H1 (cell line): ENCODE measurements at regions of chr10 and their contacts with region 1.

Region 1: DNA sequence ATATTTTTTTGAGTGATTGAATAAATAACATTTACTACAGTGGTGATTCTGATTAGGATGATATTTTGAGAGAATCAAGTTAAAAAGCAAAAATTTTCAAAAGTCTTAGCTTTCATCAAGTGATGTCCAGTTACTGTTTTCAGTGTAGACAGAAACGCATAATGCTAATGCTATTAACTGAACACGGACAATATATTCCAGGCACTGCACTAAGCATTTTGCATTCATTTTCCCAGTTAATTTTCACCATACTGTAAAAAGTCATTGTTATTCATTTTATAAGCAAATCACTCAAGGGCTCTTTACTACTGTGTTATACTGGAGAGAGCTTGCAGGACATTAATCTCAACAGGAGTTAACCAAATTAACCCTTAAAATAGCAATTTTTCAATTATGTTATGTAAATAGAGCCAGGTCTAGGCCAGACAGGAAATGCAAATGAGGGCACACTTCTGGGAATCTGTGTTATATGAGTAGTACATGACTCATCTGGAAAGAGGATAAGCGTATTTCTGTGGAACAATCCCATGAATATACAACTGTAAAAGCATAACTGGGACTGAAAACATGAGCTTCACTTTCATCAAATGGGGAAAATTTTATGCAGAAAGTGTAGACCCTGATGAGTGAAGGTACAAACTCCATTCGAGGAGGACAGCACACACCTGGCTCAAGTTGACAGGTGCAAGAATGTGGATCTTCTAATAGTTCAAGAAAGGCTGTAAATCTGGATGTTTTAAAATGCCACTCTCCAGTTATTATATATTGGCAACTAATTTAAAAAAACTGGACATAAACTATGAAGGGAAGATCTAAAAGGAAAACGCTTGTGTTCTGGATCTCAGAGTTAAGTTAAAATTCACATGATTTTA is 75.4 kb downstream of the ANK3 start:
- DNase-seq: no peak
- H3K4me3 ChIP-seq: no peak overlapping the region
- H3K27ac ChIP-seq: no peak overlapping the region
- H3K4me1 ChIP-seq: peaks cover 0 to 3% (median 0%) of the 10 kb centered on the region in 4 experiments; a peak in 1 of 7 replicates
- H3K27me3 ChIP-seq: no peaks in the 10 kb centered on the region
- CTCF ChIP-seq: no peak
- EP300 ChIP-seq: no peak
- POLR2A ChIP-seq: no peak
- RAD21 ChIP-seq: no peak

Region 2: DNA sequence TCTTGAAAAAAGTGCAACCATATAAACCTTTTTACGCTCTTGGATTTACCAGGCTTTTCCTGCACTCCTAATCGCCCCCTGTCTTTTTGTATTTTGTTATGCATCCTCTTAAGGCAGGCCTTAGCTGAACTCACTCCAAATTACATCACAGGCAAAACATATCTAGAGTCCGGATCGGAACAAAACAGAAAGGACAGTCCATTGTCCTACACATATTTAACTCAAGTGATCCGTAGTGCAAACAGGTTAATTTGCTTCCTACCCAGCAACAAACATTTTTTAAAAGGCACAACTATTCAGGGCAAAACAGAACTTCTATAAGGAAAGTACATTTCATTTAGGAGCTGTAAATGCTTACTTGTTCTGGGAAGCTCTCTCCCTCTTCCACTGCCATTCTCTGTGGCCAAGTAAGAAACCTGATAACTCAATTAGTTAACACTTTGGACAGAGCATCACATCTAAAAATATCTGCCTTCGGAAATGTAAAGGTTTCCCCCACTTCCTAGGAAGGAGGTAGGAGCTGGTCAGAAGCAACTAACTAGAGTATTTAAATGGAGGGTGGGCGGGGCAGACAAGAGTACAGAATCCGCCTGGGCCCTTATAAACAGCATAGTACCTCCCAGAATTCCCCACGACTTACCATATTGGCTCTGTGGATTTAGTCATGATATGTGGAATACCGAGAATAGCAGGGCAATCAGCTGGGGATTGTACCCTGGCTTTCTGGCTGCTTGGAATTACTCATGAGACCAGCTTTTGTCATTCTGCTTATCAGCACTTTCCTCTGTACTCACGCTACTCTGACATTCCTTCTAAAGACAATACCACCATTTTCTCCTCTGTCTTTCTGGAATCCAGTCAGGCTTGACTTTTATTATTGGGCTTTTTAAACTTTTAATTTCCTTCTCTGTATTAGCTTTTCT is 14.1 kb before region 1 on chr10:
- CTCF ChIA-PET with region 1: interaction called, 10 read pairs
- POLR2A ChIA-PET with region 1: no interaction called
- DNase-seq: peak in 1 of 2 experiments; percentile 53
- H3K4me3 ChIP-seq: no peak overlapping the region
- H3K27ac ChIP-seq: no peak overlapping the region
- H3K4me1 ChIP-seq: peaks cover 1 to 6% (median 4%) of the 10 kb centered on the region in 4 experiments; a peak in 5 of 7 replicates
- H3K27me3 ChIP-seq: no peaks in the 10 kb centered on the region
- CTCF ChIP-seq: no peak
- EP300 ChIP-seq: no peak
- POLR2A ChIP-seq: no peak
- RAD21 ChIP-seq: no peak

Region 3: DNA sequence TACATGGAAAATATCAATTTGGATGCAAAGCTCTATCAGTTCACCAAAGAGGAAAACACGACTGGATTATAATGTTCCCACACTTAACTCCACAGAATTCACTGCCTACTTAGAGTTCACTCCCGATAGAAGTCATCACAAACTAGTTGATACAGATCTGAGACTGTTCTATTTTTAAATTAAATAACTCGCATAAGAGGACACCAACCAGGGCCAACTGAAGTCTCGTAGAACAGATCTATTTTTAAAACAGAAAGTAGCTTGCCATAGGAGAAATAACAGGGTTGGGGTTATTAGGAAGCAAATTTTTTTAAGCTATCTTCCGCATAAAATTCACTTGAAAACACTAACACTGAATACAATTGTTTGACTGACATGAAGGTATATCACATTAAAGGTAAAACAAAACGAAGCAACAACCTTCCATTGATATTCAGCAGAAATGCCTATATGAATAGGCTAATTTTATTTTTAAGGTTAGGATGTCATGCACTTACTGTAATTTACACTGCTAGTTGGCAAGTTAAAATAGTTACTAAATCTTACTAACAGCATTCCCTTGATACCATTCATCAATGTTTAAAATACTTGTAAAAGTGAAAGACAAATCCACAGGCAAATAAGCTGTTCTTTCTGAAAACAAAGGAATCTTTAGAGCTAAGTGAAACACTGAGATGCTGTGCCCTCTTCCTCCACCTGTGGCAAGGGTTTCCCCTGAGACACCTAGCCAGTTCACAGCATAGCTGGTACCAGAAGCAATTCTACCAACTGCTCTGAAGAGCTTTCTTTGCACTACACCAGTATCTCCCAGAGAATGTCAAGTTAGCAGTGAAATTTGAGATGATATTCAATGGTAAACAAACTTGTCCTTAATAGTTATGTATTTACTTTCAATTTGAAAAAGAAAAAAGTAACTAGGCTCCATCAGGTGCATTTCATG is 262.1 kb after region 1 on chr10:
- CTCF ChIA-PET with region 1: no interaction called
- POLR2A ChIA-PET with region 1: no interaction called
- DNase-seq: no peak
- H3K4me3 ChIP-seq: no peak overlapping the region
- H3K27ac ChIP-seq: no peak overlapping the region
- H3K4me1 ChIP-seq: peaks cover 0 to 17% (median 13%) of the 10 kb centered on the region in 4 experiments
- H3K27me3 ChIP-seq: peaks cover 0 to 1% (median 0%) of the 10 kb centered on the region in 4 experiments; a peak in 1 of 7 replicates
- CTCF ChIP-seq: no peak
- EP300 ChIP-seq: no peak
- POLR2A ChIP-seq: no peak
- RAD21 ChIP-seq: no peak